ENCODE measurements at regions of chr10 and their contacts with region 1.

Region 1: DNA sequence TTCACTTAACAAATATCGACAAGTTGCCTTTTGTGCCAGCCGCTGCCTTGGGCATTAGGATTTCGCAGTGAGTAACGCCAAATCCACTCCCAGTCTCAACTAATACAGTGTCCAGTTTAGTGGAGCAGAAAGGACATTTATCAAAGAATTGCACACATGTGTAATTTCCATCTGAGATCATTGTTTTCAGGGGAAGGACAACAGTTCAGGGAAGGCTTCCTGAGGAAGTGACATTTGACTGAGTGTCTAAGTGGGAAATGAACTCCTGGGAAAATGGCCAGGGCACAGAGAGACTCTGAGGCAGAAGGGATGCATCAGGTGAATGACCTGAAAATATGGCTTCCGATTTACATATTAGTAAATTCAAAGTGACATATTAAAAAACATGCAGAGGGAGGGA is 89.4 kb downstream of the ITGA8 start:
- DNase-seq: no peak
- H3K4me3 ChIP-seq: no peak overlapping the region
- H3K27ac ChIP-seq: no peak overlapping the region
- H3K4me1 ChIP-seq: peaks cover 7% of the 10 kb centered on the region
- H3K27me3 ChIP-seq: no peaks in the 10 kb centered on the region
- CTCF ChIP-seq: no peak
- POLR2A ChIP-seq: no peak

Region 2: GRCh38 chr10:14954001-14954770 is 676.2 kb before region 1 on chr10 and contains the start of gene DCLRE1C:
- intact Hi-C with region 1: loop called (anchors 5 kb)
- DNase-seq: peak; percentile 95 to 96
- H3K4me3 ChIP-seq: peak within 1 kb of the TSS; percentile 61 to 96
- H3K27ac ChIP-seq: peak within 1 kb of the TSS; percentile 88
- H3K4me1 ChIP-seq: peaks cover 19% of the 10 kb centered on the region
- H3K27me3 ChIP-seq: no peaks in the 10 kb centered on the region
- CTCF ChIP-seq: no peak
- POLR2A ChIP-seq: no peak
- total RNA-seq, gene DCLRE1C: 13.5 TPM

Region 3: GRCh38 chr10:15563246-15563645 is 67.1 kb before region 1 on chr10:
- intact Hi-C with region 1: no loop called
- DNase-seq: no peak
- H3K4me3 ChIP-seq: no peak overlapping the region
- H3K27ac ChIP-seq: no peak overlapping the region
- H3K4me1 ChIP-seq: no peaks in the 10 kb centered on the region
- H3K27me3 ChIP-seq: no peaks in the 10 kb centered on the region
- CTCF ChIP-seq: no peak
- POLR2A ChIP-seq: no peak

Region 4: GRCh38 chr10:15842556-15843169 is 212.3 kb after region 1 on chr10:
- intact Hi-C with region 1: no loop called
- DNase-seq: no peak
- H3K4me3 ChIP-seq: no peak overlapping the region
- H3K27ac ChIP-seq: no peak overlapping the region
- H3K4me1 ChIP-seq: peaks cover 14% of the 10 kb centered on the region
- H3K27me3 ChIP-seq: no peaks in the 10 kb centered on the region
- CTCF ChIP-seq: no peak
- POLR2A ChIP-seq: no peak

Measured in vagina (tissue), 2 donors.